Aorta (tissue), 5 donors: ENCODE measurements at regions of chr2 and their contacts with region 1.

Region 1: GRCh38 chr2:100984892-100985379 is 17.2 kb upstream of the RPL31 start:
- DNase-seq: peak; percentile 84 to 93
- ATAC-seq: peak; percentile 77
- H3K4me3 ChIP-seq: no peak overlapping the region
- H3K27ac ChIP-seq: no peak overlapping the region
- H3K4me1 ChIP-seq: no peaks in the 10 kb centered on the region
- H3K27me3 ChIP-seq: no peaks in the 10 kb centered on the region

Region 2: DNA sequence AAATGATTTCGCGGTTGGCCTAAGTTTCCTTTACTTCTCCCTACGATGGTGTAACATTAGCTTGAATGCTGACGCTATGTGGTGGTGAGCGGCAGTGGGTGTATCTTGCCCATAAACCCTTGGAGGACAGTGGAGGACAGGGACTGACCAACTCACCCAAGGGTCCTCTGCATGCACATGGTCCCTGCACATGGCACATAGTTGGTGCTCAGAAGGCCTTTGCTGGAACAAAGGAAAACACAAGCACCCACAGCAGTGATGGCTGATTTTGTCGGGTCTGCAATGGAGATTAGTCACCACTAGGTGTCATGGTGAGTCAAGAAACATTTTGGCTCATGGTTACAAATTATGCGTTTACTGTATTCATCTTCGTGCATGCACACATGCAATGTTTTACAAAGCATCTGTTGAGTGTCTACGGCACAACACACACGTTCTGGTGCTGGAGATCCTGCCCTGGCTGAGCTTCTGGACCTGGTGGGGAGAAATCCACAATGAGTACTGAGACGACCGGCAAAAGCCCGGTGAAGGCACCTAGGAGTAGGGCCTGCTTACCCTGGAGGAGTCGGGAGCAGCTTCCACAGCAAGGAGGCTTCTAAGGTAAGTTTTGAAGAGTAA is 378.1 kb before region 1 on chr2:
- intact Hi-C with region 1: loop called (anchors 2 to 5 kb)
- DNase-seq: no peak
- ATAC-seq: no peak
- H3K4me3 ChIP-seq: no peak overlapping the region
- H3K27ac ChIP-seq: no peak overlapping the region
- H3K4me1 ChIP-seq: no peaks in the 10 kb centered on the region
- H3K27me3 ChIP-seq: no peaks in the 10 kb centered on the region

Region 3: GRCh38 chr2:100730346-100730745 is 254.6 kb before region 1 on chr2:
- intact Hi-C with region 1: loop called (anchors 1 to 5 kb)
- DNase-seq: peak; percentile 73 to 87
- ATAC-seq: peak; percentile 44
- H3K4me3 ChIP-seq: no peak overlapping the region
- H3K27ac ChIP-seq: no peak overlapping the region
- H3K4me1 ChIP-seq: peaks cover 0 to 2% of the 10 kb centered on the region in 2 donors
- H3K27me3 ChIP-seq: no peaks in the 10 kb centered on the region

Region 4: GRCh38 chr2:100875516-100876230 is 109.3 kb before region 1 on chr2:
- intact Hi-C with region 1: loop called in 1 of 2 experiments (anchors 5 kb)
- DNase-seq: no peak
- ATAC-seq: peak; percentile 48
- H3K4me3 ChIP-seq: no peak overlapping the region
- H3K27ac ChIP-seq: peak overlapping the region in 1 of 2 donors; percentile 65
- H3K4me1 ChIP-seq: peaks cover 0 to 2% of the 10 kb centered on the region in 2 donors
- H3K27me3 ChIP-seq: no peaks in the 10 kb centered on the region